ENCODE measurements at regions of chr9 and their contacts with region 1.

Region 1: DNA sequence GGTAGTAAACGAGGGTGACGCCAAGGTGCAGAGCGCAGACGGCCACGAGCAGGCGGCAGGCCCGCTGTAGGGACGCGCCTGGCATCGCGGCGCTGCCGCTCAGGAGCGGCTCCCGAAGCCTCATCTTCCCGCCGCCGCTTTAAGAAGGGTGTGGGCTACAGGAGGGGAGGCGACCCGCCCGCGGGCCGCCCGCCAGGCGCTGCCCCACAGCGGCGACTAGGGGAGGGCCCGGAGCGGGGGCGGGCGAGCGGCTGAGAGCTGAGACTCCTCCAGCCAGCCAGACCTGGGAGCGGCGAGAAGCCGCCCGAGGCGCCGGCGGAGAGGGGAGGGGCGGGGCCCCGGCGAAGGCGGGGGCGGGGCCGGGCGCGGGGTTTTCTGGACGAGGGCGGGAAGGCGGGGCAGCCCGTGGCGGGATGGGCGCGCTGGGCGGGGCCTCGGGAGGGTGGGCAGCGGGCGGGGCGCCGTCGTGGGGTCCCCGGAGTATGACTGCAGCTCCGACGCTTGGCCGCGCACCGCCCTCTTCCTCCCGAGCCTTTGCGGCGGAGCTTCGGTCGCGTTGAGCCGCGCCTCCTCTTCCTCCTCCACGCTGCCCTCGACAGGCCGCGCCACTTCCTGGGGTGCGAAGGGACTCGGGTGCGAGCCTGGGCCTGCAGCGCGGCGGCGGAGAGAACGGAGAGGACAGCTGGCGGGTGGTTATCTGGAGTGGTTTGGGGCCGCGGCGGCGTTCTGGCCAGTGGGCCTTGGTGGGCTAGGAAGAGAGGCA is at the start of gene B4GALT1:
- DNase-seq: peak; percentile 97
- H3K4me3 Mint-ChIP-seq: peak within 1 kb of the TSS; percentile 97
- H3K27ac Mint-ChIP-seq: peak within 1 kb of the TSS; percentile 97
- H3K4me1 Mint-ChIP-seq: peaks cover 53% of the 10 kb centered on the region
- H3K27me3 Mint-ChIP-seq: no peaks in the 10 kb centered on the region
- total RNA-seq, gene B4GALT1: 42.8 to 44.1 TPM

Region 2: DNA sequence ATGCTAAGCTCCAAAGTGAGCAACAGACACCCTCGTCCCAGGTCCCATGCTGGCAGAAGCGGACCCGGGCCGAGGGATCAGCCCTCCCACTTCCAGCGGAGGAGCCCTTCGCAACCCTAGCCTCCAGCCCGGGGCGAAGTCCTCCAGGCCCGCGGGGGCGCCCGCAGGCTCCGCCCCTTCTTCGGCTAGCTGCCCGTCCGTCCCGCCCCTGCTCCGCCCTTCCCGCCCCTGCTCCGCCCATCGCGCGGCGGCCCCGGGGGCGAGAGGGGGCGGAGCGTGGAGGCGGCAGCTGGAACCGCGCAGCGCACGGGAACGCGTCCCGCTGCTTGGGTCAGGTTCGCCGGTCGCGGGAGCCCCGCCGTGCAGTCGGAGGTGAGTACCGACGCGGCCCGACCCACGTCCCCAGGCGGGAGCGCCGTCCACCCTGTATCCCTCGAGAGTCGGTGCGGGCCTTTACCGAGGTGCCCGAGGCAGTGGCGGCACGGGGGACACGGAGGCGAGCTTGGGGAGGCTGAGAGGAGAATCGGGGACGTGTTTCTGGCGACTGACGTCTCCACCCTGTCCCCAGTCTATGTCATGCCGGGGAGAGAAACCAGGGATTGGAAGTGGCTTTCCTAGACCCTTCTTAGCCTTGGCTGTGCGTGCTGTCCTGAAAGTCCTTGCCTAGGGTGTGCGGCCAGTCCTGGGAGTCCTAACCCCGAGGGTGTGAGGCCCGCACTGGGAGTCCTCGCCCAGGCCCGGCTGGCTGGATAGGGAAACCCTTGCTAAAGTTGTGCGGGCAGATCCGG is 782.7 kb before region 1 on chr9 and contains the start of gene ACO1:
- CTCF ChIA-PET with region 1: no interaction called
- intact Hi-C with region 1: loop called (anchors 5 kb)
- DNase-seq: peak; percentile 82
- H3K4me3 Mint-ChIP-seq: peak within 1 kb of the TSS; percentile 79
- H3K27ac Mint-ChIP-seq: no peak within 1 kb of the TSS
- H3K4me1 Mint-ChIP-seq: peaks cover 16% of the 10 kb centered on the region
- H3K27me3 Mint-ChIP-seq: peaks cover 3% of the 10 kb centered on the region
- total RNA-seq, gene ACO1: 13.2 to 14.8 TPM

Region 3: DNA sequence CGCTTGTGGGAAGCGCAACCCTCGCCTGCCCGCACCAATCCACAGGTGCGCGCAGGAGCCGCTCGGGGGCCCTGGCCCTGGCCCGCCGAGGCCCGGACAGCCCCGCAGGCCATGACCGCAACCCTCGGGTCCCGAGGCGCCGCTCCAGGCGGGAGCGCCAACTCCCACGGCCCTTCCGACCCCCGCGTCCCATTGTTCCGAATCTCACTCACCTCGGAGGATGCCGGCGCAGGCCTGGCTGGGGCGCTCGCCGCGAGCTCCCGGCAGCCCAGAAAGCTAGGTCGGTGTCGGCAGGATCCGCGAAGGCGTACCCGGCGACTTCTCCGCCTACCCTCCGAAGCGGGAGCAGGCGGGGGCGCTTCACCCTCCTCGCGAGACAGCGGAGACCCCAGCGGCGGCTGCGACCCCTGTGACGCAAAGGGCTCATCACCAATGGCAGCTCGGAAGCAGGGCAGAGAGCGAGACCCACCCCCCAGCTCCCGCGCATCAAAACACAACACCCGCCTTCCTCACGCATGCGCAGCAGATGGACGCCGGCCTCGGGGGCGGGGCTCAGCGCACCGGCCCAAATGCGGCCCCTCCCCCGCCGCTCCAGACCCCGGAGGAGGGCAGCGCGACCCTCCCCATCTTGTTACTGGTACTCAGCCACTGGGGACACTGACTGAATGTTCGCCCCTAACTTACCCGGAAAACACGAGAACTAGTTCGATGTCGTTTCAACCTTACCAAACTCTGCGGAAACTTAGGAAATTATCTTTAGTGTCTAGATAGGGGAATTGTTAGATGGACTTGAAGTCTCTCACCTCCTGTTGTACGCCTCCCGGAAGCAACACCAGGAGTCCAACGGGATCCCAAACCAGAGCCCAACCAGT is 616.4 kb before region 1 on chr9:
- CTCF ChIA-PET with region 1: no interaction called
- intact Hi-C with region 1: loop called (anchors 1 kb)
- DNase-seq: peak; percentile 93
- H3K4me3 Mint-ChIP-seq: peak overlapping the region; percentile 95
- H3K27ac Mint-ChIP-seq: peak overlapping the region; percentile 99
- H3K4me1 Mint-ChIP-seq: peaks cover 43% of the 10 kb centered on the region
- H3K27me3 Mint-ChIP-seq: no peaks in the 10 kb centered on the region

Region 4: GRCh38 chr9:33024966-33025571 is 142.2 kb before region 1 on chr9 and contains the start of gene DNAJA1:
- CTCF ChIA-PET with region 1: no interaction called
- intact Hi-C with region 1: loop called (anchors 1 kb)
- DNase-seq: peak; percentile 93
- H3K4me3 Mint-ChIP-seq: peak within 1 kb of the TSS; percentile 95
- H3K27ac Mint-ChIP-seq: peak within 1 kb of the TSS; percentile 94
- H3K4me1 Mint-ChIP-seq: peaks cover 75% of the 10 kb centered on the region
- H3K27me3 Mint-ChIP-seq: no peaks in the 10 kb centered on the region
- total RNA-seq, gene DNAJA1: 110 to 120 TPM

Region 5: GRCh38 chr9:33092634-33093033 is 74.6 kb before region 1 on chr9:
- CTCF ChIA-PET with region 1: no interaction called
- intact Hi-C with region 1: no loop called
- DNase-seq: no peak
- H3K4me3 Mint-ChIP-seq: peak overlapping the region; percentile 34
- H3K27ac Mint-ChIP-seq: peak overlapping the region; percentile 83
- H3K4me1 Mint-ChIP-seq: peaks cover 11% of the 10 kb centered on the region
- H3K27me3 Mint-ChIP-seq: no peaks in the 10 kb centered on the region

Region 6: DNA sequence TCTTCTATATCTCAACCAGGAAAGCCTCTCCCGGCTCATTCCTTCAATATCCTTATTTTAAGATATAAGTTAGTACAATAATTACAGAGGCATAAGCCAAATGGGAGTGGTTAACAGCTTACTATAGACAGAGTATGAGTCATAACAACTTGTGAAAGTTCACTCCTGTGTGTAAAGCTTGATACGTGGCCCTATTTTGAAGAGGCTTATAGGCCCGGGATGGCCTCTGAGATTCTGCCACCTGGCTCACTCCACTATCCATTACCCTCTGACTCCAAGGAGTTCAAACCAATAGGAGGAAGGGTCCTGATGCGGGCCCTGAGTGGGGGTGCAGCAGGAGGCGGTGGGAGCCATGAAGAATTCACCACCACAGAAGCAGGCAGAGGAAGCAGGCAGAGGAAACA is 36.7 kb before region 1 on chr9:
- CTCF ChIA-PET with region 1: interaction called, 7 read pairs
- intact Hi-C with region 1: loop called (anchors 1 kb)
- DNase-seq: peak; percentile 45
- H3K4me3 Mint-ChIP-seq: no peak overlapping the region
- H3K27ac Mint-ChIP-seq: peak overlapping the region; percentile 78
- H3K4me1 Mint-ChIP-seq: peaks cover 28% of the 10 kb centered on the region
- H3K27me3 Mint-ChIP-seq: no peaks in the 10 kb centered on the region

Region 7: DNA sequence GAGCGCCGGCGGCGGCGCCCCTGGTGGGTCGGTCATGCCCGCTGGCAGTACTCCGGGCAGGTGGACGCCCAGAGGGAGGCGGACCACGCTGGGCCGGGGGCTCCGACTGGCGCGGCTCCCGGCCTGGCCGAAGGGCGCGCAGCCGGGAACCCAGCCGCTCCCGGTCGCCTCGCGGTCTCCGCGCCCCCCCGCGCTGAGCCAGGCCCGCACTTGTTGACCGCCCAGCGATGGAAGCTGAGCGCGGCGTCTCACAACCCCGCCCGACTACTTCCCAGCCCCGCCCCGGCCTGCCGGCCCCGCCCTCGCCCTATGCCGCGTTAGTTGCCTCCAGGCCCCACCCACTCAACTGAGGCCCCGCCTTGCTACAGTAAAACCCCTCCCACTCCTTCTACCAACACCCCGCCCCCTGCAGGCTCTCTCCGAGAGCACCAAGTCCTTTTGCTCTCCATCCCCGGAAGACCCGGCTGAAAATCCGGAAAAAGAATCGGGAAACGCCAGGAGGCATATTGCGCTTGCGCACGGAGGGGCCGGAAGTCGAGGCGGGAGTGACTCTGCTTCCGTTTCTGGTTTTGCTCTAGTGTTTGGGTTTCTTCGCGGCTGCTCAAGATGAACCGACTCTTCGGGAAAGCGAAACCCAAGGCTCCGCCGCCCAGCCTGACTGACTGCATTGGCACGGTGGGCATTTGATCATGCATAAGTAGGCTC is 97.4 kb after region 1 on chr9 and contains the starts of genes BAG1 and CHMP5:
- CTCF ChIA-PET with region 1: no interaction called
- intact Hi-C with region 1: loop called (anchors 1 kb)
- DNase-seq: peak; percentile 100
- H3K4me3 Mint-ChIP-seq: peak within 1 kb of the TSS; percentile 94
- H3K27ac Mint-ChIP-seq: peak within 1 kb of the TSS; percentile 98
- H3K4me1 Mint-ChIP-seq: peaks cover 47% of the 10 kb centered on the region
- H3K27me3 Mint-ChIP-seq: no peaks in the 10 kb centered on the region
- total RNA-seq, gene BAG1: 38.1 to 40.5 TPM
- total RNA-seq, gene CHMP5: 151 to 162 TPM

Region 8: DNA sequence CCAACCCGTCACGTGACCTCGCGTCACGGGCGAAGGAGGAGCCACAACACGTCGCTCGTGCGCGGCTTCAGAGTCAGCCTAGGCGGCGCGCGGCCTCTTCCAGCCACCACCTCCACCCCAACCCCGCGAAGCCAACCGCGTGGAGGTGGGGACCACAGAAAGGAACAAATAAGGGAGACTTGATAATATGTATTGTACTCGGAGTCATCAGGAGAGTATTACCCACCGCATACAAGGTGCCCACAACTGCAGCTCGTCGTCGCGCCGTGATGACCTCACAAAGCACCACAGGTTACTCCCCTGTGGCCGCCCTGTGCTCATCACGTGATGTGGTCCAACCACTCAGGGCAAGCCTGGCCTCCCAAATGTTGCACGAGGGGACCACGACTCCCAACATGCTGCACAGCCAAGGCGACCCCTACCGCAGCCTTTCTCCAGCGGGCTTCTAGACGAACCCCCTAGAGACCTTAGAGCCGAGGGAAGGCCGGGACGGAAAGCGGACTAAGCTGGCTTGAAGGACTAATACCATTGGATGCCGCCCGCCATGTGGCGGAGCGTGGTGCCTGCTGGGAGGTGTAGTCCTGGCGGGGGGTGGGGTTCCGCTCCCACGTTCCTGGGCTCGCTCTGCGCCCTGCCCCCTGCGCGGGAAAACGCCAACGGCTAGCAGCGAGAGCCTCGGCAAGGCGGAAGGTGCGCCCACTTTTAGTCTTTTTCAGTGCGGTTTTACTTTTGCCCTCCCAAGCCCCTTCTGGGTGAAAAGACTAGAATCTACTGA is 881.9 kb after region 1 on chr9:
- CTCF ChIA-PET with region 1: no interaction called
- intact Hi-C with region 1: loop called (anchors 10 kb)
- DNase-seq: peak; percentile 98
- H3K4me3 Mint-ChIP-seq: peak overlapping the region; percentile 91
- H3K27ac Mint-ChIP-seq: peak overlapping the region; percentile 98
- H3K4me1 Mint-ChIP-seq: peaks cover 33% of the 10 kb centered on the region
- H3K27me3 Mint-ChIP-seq: no peaks in the 10 kb centered on the region

Measured in activated naive CD4-positive, alpha-beta T cell treated with anti-CD3 and anti-CD28 coated beads for 36 hours (primary cell).